ENCODE measurements at regions of chr4 and their contacts with region 1.

Region 1: DNA sequence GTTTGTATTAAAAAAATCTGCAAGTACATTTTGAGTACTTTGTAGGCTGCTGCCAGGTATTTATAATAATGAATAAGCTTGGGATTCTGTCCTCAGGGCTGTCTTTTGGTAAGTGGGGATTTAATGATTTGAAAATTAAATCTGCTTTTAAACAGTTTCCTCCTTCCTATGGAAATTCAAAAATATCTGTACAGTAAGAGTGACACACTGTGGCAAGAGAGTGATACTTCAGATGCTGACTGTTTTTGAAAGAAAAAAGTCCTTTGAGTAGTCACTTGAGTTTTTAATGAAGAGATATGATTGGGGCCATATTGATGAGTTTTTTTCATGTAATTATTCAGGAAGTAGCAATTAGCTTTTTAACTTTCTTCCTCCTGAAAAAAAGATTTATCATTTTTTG is 49.2 kb downstream of the SMARCAD1 start:
- DNase-seq: no peak
- ATAC-seq: no peak
- H3K4me3 Mint-ChIP-seq: no peak overlapping the region
- H3K27ac Mint-ChIP-seq: no peak overlapping the region
- H3K4me1 Mint-ChIP-seq: no peaks in the 10 kb centered on the region
- H3K27me3 Mint-ChIP-seq: no peaks in the 10 kb centered on the region
- CTCF ChIP-seq: no peak

Region 2: DNA sequence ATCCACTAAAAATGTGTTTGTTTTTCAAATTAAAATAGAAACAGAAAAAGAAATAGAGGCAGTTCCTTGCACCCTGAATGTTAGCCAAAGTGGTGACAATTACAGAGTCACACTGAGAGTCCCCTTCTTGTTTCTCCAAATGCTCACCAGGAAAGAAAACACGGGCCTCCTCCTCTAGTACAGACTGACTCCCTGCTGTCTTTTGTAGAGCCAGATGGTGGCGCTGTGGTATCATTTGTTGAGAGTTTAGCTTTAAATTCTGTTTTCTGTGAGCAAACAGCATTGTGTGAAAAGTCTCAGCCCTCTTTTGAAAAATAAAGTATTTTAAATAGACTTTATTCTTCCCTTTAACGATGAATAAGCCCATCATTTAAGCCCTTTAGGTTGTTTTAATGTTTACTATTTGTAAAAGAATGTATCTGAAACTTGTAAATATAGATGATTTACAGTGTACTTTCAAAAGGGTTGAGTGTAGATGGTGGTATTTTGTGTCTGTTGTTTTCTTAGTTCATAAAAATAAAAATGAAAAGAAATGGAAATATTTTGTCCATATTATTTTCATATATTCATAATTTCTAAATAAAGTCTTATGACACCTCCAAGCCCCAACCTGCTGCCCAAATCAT is 465.1 kb before region 1 on chr4:
- CTCF ChIA-PET with region 1: no interaction called
- POLR2A ChIA-PET with region 1: no interaction called
- intact Hi-C with region 1: loop called (anchors 5 kb)
- DNase-seq: no peak
- ATAC-seq: peak; percentile 31
- H3K4me3 Mint-ChIP-seq: no peak overlapping the region
- H3K27ac Mint-ChIP-seq: no peak overlapping the region
- H3K4me1 Mint-ChIP-seq: no peaks in the 10 kb centered on the region
- H3K27me3 Mint-ChIP-seq: no peaks in the 10 kb centered on the region
- CTCF ChIP-seq: no peak

Region 3: GRCh38 chr4:94244087-94244828 is 12.6 kb before region 1 on chr4:
- CTCF ChIA-PET with region 1: no interaction called
- POLR2A ChIA-PET with region 1: no interaction called
- intact Hi-C with region 1: no loop called
- DNase-seq: no peak
- ATAC-seq: no peak
- H3K4me3 Mint-ChIP-seq: no peak overlapping the region
- H3K27ac Mint-ChIP-seq: no peak overlapping the region
- H3K4me1 Mint-ChIP-seq: peaks cover 17% of the 10 kb centered on the region
- H3K27me3 Mint-ChIP-seq: no peaks in the 10 kb centered on the region
- CTCF ChIP-seq: no peak